ENCODE measurements at regions of chr9 and their contacts with region 1.

Region 1: GRCh38 chr9:124126571-124127289 is 115.2 kb downstream of the LHX2 start:
- DNase-seq: peak; percentile 92

Region 2: DNA sequence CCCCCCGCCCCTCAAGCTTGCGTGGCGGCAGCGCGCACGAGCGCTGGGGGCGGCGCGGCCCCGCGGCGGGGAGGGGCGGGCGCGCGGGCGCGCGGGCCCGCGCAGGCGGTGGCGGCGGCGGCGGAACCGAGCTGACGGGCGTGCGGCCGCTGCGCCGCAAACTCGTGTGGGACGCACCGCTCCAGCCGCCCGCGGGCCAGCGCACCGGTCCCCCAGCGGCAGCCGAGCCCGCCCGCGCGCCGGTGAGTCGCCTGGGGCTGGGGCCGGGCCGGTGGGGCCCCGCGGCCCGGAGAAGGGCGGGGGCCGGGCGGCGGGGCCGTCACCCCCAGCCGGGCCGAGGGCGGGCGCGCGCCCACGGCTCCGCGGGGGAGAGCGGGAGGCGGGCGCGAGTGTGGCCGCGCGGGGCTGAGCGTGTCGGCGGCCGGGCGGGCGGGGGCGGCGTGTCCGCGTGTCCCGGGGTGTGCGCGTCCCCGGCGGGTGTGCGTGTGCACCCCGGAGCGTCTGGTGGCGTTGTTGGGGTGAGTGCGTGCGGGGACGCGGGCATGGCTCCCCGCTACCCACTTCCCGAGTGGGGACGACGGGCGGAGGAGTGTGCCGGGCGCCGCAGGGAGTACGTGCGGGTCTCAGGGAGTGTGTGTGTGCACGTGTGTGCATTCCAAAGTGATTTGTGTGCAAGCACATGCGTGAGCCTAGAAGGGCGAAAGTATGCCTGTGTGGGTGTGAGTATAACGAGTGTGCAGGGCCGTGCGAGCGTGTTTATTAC is 131.3 kb after region 1 on chr9 and contains the start of gene NEK6:
- intact Hi-C with region 1: loop called in 1 of 2 experiments (anchors 10 kb)
- DNase-seq: peak; percentile 83
- total RNA-seq, gene NEK6: 56.9 to 62.7 TPM

Region 3: DNA sequence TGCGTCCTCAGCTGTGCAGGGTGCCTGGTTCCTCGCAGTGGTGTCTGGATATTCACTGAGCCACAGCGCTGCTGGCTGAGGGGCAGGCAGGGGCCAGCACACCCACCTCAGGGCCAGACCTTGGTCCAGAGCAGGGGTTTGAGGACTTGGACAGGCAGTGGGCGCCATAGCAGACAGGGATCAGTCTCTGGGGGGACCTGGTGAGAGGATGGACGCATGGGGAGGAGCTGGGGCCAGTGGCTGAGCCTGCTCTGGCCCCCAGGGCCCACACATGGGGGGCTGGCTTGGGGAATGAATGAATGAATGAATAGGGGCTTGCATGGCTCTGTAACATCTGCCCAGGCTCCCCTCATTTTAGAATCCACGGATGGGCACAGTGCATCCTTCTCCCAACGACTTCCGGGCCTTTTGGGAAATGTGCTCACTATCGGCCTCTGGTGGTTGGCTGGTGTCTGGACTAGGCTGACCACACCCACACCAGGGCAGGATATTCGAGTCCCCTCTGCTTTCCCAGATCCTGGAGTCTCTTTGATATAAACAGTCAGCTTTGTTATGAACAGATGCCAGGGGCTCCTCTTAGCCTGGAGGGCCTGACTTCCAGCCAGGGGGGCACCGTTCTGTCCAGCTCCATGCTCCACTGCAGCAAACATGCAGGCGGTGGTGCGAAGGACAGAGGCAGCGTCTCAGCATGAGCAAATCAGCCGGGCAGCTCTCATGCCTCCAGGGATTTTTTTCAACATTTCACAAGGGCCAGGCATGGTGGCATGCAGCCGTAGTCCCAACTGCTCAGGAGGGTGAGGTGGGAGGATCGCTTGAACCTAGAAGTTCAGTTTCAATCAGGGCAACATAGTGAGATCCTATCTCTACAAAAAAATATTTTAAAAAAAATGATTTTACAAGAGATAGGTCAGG is 193.6 kb after region 1 on chr9:
- intact Hi-C with region 1: loop called (anchors 5 kb)
- DNase-seq: no peak

Region 4: DNA sequence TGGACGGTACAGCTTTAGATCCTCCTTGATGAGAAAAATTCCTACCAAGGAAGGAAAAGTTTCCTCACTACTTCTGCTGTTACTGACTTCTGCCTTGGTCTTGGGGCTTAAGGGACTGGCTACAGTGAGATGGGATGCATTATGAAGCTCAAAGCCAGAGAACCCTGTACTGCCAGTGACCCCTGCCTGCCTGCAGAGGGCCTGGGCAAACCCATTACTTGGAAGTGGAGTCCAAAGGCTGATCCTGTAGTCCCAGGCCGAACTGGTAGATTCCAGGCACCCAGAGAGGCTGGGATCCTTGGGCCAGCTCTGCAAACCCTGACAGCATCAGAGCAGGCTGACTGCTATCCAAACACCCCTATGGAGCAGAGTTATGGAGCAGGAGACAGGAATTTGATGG is 406.2 kb after region 1 on chr9:
- intact Hi-C with region 1: loop called (anchors 5 to 10 kb)
- DNase-seq: no peak

Region 5: DNA sequence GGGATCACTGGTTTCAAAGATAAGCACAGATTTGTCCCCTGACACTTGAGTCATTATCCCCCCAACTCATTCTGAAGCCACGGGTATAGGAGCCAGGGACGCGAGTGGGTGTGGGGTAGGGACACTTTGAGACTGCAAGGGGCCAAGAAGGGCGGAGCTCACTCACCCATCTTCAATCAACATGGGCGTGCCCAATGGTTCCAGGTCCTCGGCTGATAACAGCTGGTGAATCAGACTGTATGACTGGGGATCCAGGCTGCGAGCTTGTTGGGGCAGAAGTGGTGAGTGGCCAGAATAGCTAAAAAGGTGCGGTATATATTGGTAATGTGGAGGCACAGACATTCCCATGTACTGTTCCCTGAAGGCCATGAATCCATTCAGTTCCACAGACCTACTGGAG is 411.2 kb after region 1 on chr9:
- intact Hi-C with region 1: loop called (anchors 5 to 10 kb)
- DNase-seq: no peak

Measured in posterior vena cava (tissue), 2 donors.